Caco-2 (cell line): ENCODE measurements at regions of chr4 and their contacts with region 1.

Region 1: GRCh38 chr4:71449878-71450277 is 111.1 kb downstream of the SLC4A4 start:
- DNase-seq: no peak
- H3K4me3 ChIP-seq: no peak overlapping the region
- H3K4me3 Mint-ChIP-seq: no peak overlapping the region
- H3K27ac Mint-ChIP-seq: no peak overlapping the region
- H3K4me1 ChIP-seq: no peaks in the 10 kb centered on the region
- H3K4me1 Mint-ChIP-seq: no peaks in the 10 kb centered on the region
- H3K27me3 ChIP-seq: no peaks in the 10 kb centered on the region
- H3K27me3 Mint-ChIP-seq: peaks cover 4% of the 10 kb centered on the region
- CTCF ChIP-seq: no peak

Region 2: DNA sequence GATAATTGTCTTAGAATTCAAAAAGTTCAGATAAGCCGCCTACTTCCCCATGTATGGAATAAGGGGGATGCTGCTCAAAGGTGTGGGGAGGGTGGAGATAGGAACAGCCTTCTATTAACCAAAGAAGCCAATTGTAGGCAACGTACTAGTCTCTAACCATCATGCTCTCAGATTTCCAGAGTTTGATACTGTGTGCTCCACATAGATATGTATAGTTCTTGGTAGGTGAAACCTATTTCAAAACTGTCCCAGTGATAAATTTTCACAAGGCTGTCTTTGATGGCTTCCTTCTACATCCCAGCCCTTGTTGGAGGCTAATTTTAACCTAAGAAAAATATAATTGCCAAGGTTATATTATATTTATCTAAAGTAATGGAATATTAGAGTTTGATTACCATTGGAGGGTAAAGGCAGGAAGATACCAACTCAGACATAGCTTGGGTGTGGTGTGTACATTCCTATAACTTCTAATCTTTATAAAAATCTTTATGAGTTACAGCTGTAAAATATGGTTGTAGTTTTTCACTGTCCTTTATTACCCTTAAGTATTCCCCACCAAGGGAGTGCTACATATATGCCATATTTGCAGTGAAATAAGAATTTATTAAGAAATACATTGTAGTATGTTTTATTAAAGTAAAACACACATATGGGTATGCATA is 23.4 kb before region 1 on chr4:
- CTCF ChIA-PET with region 1: no interaction called
- POLR2A ChIA-PET with region 1: no interaction called
- intact Hi-C with region 1: no loop called
- DNase-seq: no peak
- H3K4me3 ChIP-seq: no peak overlapping the region
- H3K4me3 Mint-ChIP-seq: no peak overlapping the region
- H3K27ac Mint-ChIP-seq: no peak overlapping the region
- H3K4me1 ChIP-seq: no peaks in the 10 kb centered on the region
- H3K4me1 Mint-ChIP-seq: peaks cover 8% of the 10 kb centered on the region
- H3K27me3 ChIP-seq: no peaks in the 10 kb centered on the region
- H3K27me3 Mint-ChIP-seq: peaks cover 3% of the 10 kb centered on the region
- CTCF ChIP-seq: no peak

Region 3: DNA sequence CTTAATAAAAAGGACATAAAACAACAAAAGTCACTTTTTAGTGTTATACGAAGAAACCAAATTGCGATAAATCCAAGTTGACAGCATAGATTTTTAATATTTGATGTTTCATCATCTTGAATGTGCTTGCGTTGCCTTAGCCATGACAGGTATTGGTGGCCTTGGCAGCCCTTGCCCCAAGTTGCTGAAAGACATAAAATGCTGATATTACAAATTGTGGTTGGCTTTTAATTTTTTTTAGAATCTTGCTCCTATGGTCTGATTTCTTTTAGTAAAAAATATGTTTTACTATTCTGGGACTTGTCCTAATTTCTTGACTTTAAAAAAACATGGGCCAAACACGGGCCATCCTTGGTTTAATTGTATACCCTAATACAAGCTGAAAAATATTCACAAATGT is 11.5 kb after region 1 on chr4:
- CTCF ChIA-PET with region 1: interaction called, 11 read pairs
- POLR2A ChIA-PET with region 1: no interaction called
- intact Hi-C with region 1: no loop called
- DNase-seq: no peak
- H3K4me3 ChIP-seq: no peak overlapping the region
- H3K4me3 Mint-ChIP-seq: no peak overlapping the region
- H3K27ac Mint-ChIP-seq: no peak overlapping the region
- H3K4me1 ChIP-seq: no peaks in the 10 kb centered on the region
- H3K4me1 Mint-ChIP-seq: no peaks in the 10 kb centered on the region
- H3K27me3 ChIP-seq: no peaks in the 10 kb centered on the region
- H3K27me3 Mint-ChIP-seq: no peaks in the 10 kb centered on the region
- CTCF ChIP-seq: no peak